ENCODE measurements at regions of chr2 and their contacts with region 1.

Region 1: GRCh38 chr2:54704688-54705605 is 18.5 kb upstream of the EML6 start:
- DNase-seq: no peak
- H3K4me3 Mint-ChIP-seq: no peak overlapping the region
- H3K27ac Mint-ChIP-seq: no peak overlapping the region
- H3K4me1 Mint-ChIP-seq: peaks cover 15% of the 10 kb centered on the region
- H3K27me3 Mint-ChIP-seq: peaks cover 53% of the 10 kb centered on the region

Region 2: DNA sequence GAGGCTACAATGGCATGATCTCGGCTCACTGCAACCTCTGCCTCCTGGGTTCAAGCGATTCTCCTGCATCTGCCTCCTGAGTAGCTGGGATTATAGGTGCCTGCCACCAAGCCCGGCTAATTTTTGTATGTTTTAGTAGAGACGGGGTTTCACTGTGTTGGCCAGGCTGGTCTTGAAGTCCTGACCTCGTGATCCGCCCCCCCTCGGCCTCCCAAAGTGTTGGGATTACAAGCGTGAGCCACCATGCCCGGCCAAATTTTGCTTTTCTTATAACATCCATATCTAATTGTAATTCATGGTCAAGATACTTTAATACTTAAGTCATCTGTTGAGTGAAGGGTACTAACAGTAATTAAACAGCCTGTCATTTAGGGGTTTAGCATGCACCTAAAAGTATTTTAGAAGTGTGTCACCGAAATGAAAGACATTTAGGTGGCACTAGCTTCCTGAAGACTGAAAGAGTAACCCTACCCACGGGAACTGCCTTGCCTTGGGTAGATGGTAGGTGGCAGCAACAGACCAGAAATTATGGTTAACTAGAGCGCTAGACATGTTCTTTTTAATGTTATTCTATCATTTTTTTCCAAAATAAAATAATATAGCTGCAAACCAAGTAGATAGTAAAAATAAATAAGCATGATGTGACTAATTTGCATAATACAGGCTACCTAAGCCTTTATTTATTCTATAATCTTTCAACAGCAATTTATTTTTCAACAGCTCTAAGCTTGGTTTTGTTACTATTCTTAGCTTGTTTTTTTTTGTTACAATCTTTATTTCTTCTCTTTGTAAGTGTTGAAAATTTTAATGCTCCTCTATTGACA is 598.1 kb before region 1 on chr2:
- intact Hi-C with region 1: loop called (anchors 5 kb)
- DNase-seq: peak; percentile 23
- H3K4me3 Mint-ChIP-seq: no peak overlapping the region
- H3K27ac Mint-ChIP-seq: no peak overlapping the region
- H3K4me1 Mint-ChIP-seq: peaks cover 6% of the 10 kb centered on the region
- H3K27me3 Mint-ChIP-seq: peaks cover 21% of the 10 kb centered on the region

Region 3: GRCh38 chr2:54579684-54580620 is 125.0 kb before region 1 on chr2:
- intact Hi-C with region 1: no loop called
- DNase-seq: peak; percentile 59
- H3K4me3 Mint-ChIP-seq: peak overlapping the region; percentile 66
- H3K27ac Mint-ChIP-seq: peak overlapping the region; percentile 95
- H3K4me1 Mint-ChIP-seq: peaks cover 84% of the 10 kb centered on the region
- H3K27me3 Mint-ChIP-seq: no peaks in the 10 kb centered on the region

Region 4: DNA sequence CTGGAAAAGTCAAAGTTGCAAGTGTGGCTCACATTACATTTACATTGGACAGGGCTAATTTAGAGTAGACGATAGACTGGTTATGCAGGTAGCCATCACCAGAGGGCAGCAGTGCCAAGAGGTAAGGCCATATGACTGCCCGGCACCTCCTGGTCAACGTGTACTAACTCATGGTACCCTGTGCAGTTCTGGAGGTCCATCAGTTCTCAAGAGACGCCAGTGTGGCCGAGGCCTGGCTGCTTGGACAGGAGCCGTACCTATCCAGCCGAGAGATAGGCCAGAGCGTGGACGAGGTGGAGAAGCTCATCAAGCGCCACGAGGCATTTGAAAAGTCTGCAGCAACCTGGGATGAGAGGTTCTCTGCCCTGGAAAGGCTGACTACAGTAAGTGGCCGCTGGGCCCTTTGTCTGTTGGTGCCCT is 47.3 kb before region 1 on chr2:
- intact Hi-C with region 1: loop called (anchors 1 kb)
- DNase-seq: no peak
- H3K4me3 Mint-ChIP-seq: no peak overlapping the region
- H3K27ac Mint-ChIP-seq: peak overlapping the region; percentile 8
- H3K4me1 Mint-ChIP-seq: peaks cover 21% of the 10 kb centered on the region
- H3K27me3 Mint-ChIP-seq: no peaks in the 10 kb centered on the region

Region 5: GRCh38 chr2:54665436-54665856 is 39.5 kb before region 1 on chr2:
- intact Hi-C with region 1: loop called (anchors 1 kb)
- DNase-seq: no peak
- H3K4me3 Mint-ChIP-seq: no peak overlapping the region
- H3K27ac Mint-ChIP-seq: no peak overlapping the region
- H3K4me1 Mint-ChIP-seq: peaks cover 10% of the 10 kb centered on the region
- H3K27me3 Mint-ChIP-seq: no peaks in the 10 kb centered on the region

Measured in activated T-helper 2 cell treated with anti-CD3 and anti-CD28 coated beads, Interferon-gamma antibody, Interleukin-2, Interleukin-4, amounts not matched to agents 10 μg/mL and 5 μg/mL and 100 μg/mL, durations not matched to agents 14 hours and 24 hours and 36 hours (primary cell).